ENCODE measurements at regions of chr4 and their contacts with region 1.

Region 1: GRCh38 chr4:7863911-7864681 is 75.6 kb downstream of the AFAP1 start:
- DNase-seq: peak in 2 of 14 experiments; percentile 38 to 46
- ATAC-seq: peak; percentile 54
- H3K4me3 ChIP-seq: no peak overlapping the region
- H3K4me3 Mint-ChIP-seq: peak overlapping the region; percentile 72
- H3K27ac ChIP-seq: no peak overlapping the region
- H3K27ac Mint-ChIP-seq: peak overlapping the region; percentile 70
- H3K4me1 ChIP-seq: peaks cover 8% of the 10 kb centered on the region
- H3K4me1 Mint-ChIP-seq: peaks cover 33% of the 10 kb centered on the region
- H3K27me3 ChIP-seq: no peaks in the 10 kb centered on the region
- H3K27me3 Mint-ChIP-seq: no peaks in the 10 kb centered on the region
- CTCF ChIP-seq: no peak

Region 2: GRCh38 chr4:7876201-7876875 is 12.2 kb after region 1 on chr4:
- CTCF ChIA-PET with region 1: interaction called, 5 read pairs
- POLR2A ChIA-PET with region 1: interaction called, 11 read pairs
- intact Hi-C with region 1: no loop called
- DNase-seq: peak in 12 of 14 experiments; percentile 23 to 66 (median 44)
- ATAC-seq: peak; percentile 77
- H3K4me3 ChIP-seq: peak overlapping the region; percentile 28
- H3K4me3 Mint-ChIP-seq: peak overlapping the region; percentile 62
- H3K27ac ChIP-seq: peak overlapping the region; percentile 17 to 60
- H3K27ac Mint-ChIP-seq: peak overlapping the region; percentile 66
- H3K4me1 ChIP-seq: peaks cover 28% of the 10 kb centered on the region
- H3K4me1 Mint-ChIP-seq: peaks cover 64% of the 10 kb centered on the region
- H3K27me3 ChIP-seq: no peaks in the 10 kb centered on the region
- H3K27me3 Mint-ChIP-seq: no peaks in the 10 kb centered on the region
- CTCF ChIP-seq: peak; percentile 16

Measured in CD4-positive, alpha-beta T cell (primary cell).